ENCODE measurements at regions of chr1 and their contacts with region 1.

Region 1: DNA sequence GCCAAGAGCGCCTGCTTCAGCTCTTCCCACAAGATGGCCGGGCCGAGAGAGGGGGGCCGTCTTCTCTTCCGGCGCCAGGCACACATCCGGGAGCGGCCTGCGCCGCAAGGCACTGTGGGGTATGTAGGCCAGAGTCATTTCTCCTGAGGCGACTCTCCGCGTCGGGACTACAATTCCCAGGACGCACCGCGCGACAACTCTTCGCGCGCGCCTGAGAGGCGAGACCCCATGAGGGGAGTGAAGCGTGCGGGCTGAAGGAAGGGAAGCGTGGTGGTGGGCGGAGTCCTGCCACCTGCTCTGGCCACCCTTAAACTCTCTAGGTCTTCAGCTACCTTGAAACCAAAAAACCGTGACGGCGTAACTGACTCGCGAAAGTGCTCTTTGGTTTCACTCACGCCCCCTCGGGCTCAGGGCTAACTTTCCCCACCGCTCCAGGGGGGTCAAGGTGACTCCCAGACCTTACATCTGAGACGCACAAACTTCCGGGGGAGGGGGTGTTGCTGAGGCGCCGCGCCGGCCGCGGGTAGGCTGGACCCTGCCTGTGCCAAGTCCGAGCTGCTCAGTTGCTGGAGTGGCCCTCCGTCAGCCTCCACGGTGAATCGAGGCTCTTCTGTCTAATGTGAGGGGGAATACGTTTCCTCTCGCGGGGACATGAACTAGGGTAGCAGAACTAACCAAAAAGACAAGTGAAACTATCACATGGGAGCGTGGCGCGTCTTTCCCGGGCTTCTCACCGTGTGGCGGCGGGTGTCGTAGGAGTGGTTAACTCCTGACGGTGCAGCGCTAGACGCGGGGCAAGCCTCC is at the start of gene SERBP1:
- DNase-seq: peak; percentile 95
- H3K4me3 Mint-ChIP-seq: peak within 1 kb of the TSS; percentile 90
- H3K27ac Mint-ChIP-seq: peak within 1 kb of the TSS; percentile 97
- H3K4me1 Mint-ChIP-seq: peaks cover 62% of the 10 kb centered on the region
- H3K27me3 Mint-ChIP-seq: no peaks in the 10 kb centered on the region
- total RNA-seq, gene SERBP1: 585 and 603 TPM in 2 replicates

Region 2: GRCh38 chr1:66764994-66765578 is 665.5 kb before region 1 on chr1:
- intact Hi-C with region 1: loop called (anchors 10 kb)
- DNase-seq: peak; percentile 20
- H3K4me3 Mint-ChIP-seq: no peak overlapping the region
- H3K27ac Mint-ChIP-seq: no peak overlapping the region
- H3K4me1 Mint-ChIP-seq: peaks cover 28% of the 10 kb centered on the region
- H3K27me3 Mint-ChIP-seq: no peaks in the 10 kb centered on the region

Region 3: DNA sequence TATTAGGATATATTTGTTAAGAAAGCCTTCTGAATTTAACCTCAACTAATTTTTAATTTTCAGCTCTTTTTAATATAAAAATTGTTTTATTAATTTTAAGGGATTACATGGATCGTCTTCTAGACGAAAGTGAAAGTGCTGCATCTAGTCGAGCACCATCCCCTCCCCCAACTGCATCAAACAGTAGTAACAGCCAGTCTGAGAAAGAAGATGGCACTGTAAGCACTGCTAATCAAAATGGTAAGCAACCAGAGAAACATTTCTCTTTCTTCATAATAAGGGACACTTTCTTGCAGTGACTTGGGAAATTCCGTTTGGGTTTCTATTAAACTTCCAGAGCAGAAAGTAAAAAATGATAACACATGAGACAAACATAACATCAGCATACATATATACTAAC is 448.9 kb before region 1 on chr1:
- intact Hi-C with region 1: loop called (anchors 5 kb)
- DNase-seq: peak; percentile 40
- H3K4me3 Mint-ChIP-seq: peak overlapping the region; percentile 69
- H3K27ac Mint-ChIP-seq: peak overlapping the region; percentile 75
- H3K4me1 Mint-ChIP-seq: peaks cover 35% of the 10 kb centered on the region
- H3K27me3 Mint-ChIP-seq: no peaks in the 10 kb centered on the region

Region 4: DNA sequence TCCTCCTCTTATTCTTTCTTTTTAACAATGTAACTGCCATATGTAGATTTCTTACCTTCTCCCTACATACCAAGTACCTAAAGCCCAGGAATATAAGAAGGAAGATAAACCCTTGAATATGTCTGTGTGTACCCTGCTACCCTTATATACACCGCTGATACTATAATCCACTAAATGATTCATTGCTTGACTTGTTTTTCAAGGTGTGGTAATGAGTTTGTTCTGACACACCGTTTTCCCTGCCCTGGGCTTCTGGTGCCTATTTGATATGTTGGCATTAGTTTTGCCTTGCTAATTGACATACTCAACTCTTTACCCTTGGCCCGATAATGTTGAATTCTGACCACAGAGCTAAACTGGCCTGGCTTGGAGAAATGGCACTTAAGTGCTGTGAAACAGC is 200.0 kb before region 1 on chr1:
- intact Hi-C with region 1: loop called (anchors 2 kb)
- DNase-seq: no peak
- H3K4me3 Mint-ChIP-seq: no peak overlapping the region
- H3K27ac Mint-ChIP-seq: no peak overlapping the region
- H3K4me1 Mint-ChIP-seq: peaks cover 35% of the 10 kb centered on the region
- H3K27me3 Mint-ChIP-seq: no peaks in the 10 kb centered on the region

Region 5: DNA sequence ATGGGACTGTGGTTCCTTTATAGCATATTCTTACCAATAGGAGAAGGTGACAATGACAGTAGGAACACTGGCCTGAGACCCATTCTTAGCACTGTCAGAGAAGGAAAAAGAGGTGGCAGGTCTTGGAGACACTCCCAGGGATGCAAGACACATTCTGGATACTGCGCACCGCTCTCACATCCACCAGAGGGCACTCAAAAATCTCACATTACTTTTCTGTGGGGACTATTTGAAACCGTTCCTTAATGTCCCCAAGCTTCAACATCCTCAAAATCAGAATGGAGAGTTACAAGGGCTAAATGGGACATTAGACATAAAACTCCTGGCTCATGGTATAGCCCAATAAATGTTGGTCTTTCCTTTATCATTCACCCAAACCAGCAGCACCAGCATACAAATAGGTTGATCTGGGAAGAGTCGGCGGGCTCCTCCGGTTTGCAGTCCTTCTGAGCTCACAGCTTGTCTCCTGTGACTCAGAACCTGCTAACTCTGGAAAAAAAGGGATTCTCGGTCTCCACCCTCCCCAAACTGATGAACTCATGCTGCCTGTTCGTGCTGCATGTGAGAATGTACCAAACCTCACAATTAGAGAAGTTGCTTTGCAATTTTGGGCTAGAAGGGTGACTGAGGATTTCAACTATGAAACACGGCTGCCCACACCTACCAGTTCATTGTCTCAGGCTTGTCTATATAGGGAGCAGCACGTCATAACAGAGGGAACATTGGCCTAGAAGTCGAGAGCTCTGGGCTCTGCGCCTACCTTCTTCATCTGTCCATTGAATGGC is 82.7 kb before region 1 on chr1:
- intact Hi-C with region 1: loop called (anchors 5 kb)
- DNase-seq: no peak
- H3K4me3 Mint-ChIP-seq: no peak overlapping the region
- H3K27ac Mint-ChIP-seq: peak overlapping the region; percentile 51
- H3K4me1 Mint-ChIP-seq: peaks cover 62% of the 10 kb centered on the region
- H3K27me3 Mint-ChIP-seq: no peaks in the 10 kb centered on the region

Region 6: GRCh38 chr1:67500413-67500959 is 69.9 kb after region 1 on chr1:
- intact Hi-C with region 1: loop called (anchors 1 kb)
- DNase-seq: peak; percentile 84
- H3K4me3 Mint-ChIP-seq: no peak overlapping the region
- H3K27ac Mint-ChIP-seq: no peak overlapping the region
- H3K4me1 Mint-ChIP-seq: peaks cover 9% of the 10 kb centered on the region
- H3K27me3 Mint-ChIP-seq: peaks cover 9% of the 10 kb centered on the region